ENCODE measurements at regions of chr16 and their contacts with region 1.

Region 1: GRCh38 chr16:31073968-31074813 is at the starts of genes ZNF646 and ZNF668:
- DNase-seq: peak; percentile 90 to 99 (median 98)
- ATAC-seq: peak; percentile 80 to 84
- H3K4me3 Mint-ChIP-seq: peak within 1 kb of the TSS; percentile 81 to 97 (median 96)
- H3K27ac Mint-ChIP-seq: peak within 1 kb of the TSS; percentile 90 to 99 (median 96)
- H3K4me1 Mint-ChIP-seq: peaks cover 21 to 52% (median 45%) of the 10 kb centered on the region in 4 donors
- H3K27me3 Mint-ChIP-seq: no peaks in the 10 kb centered on the region
- polyA plus RNA-seq, gene ZNF646: 2.8 to 9.1 (median 4.0) TPM
- polyA plus RNA-seq, gene ZNF668: 4.2 to 9.1 (median 7.5) TPM

Region 2: GRCh38 chr16:30941600-30942425 is 132.4 kb before region 1 on chr16:
- POLR2A ChIA-PET with region 1: interaction called, 12 read pairs
- DNase-seq: peak in 9 of 10 donors; percentile 36 to 67 (median 52)
- ATAC-seq: peak; percentile 93 to 98
- H3K4me3 Mint-ChIP-seq: peak overlapping the region in 2 of 10 donors; percentile 12 to 55
- H3K27ac Mint-ChIP-seq: peak overlapping the region in 4 of 10 donors; percentile 34 to 62 (median 48)
- H3K4me1 Mint-ChIP-seq: peaks cover 14 to 21% (median 19%) of the 10 kb centered on the region in 4 donors
- H3K27me3 Mint-ChIP-seq: no peaks in the 10 kb centered on the region

Region 3: DNA sequence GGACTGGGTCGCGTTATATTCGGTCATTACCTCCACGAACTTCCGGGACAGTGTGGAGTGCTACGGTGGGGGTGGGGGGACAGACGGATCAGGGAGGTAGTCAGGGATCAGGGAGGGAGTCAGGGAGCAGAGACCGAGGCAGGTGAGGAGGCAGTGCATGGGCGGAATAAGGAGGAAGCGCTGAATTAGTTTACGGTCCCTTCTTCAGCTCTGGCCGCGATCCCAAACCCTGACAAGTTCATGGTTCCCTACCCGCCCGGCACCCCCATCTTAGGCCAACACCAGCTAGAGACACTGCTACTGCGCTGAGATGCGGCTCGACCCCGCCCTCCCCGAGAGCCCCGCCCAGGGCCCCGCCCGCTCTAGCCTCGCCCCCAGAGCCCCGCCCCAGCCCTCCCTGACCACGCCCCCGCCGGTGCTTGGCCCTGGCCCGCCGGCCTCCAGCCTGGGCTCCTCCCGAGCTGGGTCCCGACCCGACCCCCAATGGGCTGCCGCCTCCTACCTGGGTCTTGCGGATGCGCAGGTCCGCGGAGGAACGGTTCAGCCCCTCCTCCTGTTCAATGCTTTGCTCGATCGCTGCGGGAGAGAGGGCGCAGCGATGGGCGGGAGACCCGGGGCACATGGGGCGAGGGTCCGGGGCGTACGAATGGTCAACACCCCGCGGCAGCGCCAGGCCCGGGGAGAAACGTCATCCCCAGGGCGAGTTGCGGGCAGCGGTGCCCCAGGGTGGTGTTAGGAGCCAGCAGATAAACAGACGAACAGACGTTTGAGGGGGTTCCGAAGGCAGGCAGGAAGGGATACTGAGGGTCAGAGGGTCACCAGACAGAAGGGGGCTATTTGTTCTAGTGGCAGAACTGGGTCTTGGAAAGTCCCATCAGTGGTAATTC is 76.9 kb before region 1 on chr16:
- POLR2A ChIA-PET with region 1: interaction called, 11 read pairs
- DNase-seq: peak; percentile 51 to 93 (median 75)
- ATAC-seq: peak; percentile 97 to 99
- H3K4me3 Mint-ChIP-seq: peak overlapping the region; percentile 81 to 93 (median 84)
- H3K27ac Mint-ChIP-seq: peak overlapping the region; percentile 65 to 95 (median 92)
- H3K4me1 Mint-ChIP-seq: peaks cover 2 to 12% (median 8%) of the 10 kb centered on the region in 4 donors
- H3K27me3 Mint-ChIP-seq: no peaks in the 10 kb centered on the region

Region 4: DNA sequence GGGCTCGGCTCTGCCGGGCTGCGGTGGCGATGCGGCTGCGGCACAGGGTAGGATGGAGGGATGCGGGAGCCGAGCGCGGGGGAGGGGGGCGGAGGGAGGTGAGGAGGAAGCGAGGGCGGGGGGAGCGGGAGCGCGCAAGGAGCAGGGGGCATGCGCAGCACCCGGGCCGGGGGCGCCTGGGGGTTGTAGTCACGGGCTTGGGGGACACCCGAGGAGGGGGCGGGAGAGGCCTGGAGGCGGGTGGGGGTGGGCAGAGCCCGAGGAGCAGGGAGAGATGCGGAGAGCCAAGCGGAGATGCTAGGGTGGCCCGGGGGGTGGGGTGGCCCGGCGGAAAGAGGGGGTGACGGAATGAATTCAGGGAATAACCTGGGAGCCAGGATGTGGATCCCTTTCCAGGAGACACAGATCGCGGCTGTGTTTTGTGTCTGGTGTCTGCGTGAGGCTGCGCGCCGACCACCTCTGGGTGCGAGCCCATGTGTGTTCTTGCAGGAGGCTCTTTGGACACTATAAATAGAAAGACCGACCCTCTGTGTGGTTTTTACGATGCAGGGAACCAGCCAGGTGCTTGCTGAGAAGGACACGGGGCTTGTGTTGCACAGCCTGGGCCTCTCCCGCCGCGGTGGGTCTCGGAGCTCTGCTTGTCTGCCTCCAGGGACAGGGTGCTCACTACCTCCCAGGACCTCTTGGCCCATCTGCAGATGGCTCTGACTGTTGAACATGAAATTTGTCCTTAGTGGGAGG is 63.4 kb before region 1 on chr16 and contains the start of gene STX1B:
- POLR2A ChIA-PET with region 1: no interaction called
- DNase-seq: peak; percentile 34 to 84 (median 60)
- ATAC-seq: peak; percentile 81 to 83
- H3K4me3 Mint-ChIP-seq: peak within 1 kb of the TSS; percentile 76 to 92 (median 84)
- H3K27ac Mint-ChIP-seq: peak within 1 kb of the TSS; percentile 11 to 91 (median 80)
- H3K4me1 Mint-ChIP-seq: peaks cover 9 to 34% (median 20%) of the 10 kb centered on the region in 4 donors
- H3K27me3 Mint-ChIP-seq: peaks cover 2 to 26% (median 14%) of the 10 kb centered on the region in 5 donors
- polyA plus RNA-seq, gene STX1B: 0.07 to 0.49 TPM in 2 of 3 donors, not detected in the other

Region 5: DNA sequence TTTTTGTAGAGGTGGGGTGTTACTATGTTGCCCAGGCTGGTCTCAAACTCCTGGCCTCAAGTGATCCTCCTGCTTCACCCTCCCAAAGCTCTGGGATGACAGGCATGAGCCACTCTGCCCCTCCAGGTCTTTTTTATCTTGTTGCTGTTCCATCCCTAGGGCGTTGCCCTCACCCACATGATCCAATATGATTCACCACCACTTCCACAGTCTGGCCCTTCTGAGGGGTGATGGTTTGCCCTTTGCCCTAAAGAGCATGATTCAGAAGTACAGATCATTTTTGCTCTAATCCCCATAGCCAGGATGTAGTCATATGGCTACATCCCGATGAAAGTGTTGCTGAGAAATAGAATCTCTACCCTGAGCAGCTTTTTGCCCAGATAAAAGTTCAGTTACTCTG is 22.1 kb before region 1 on chr16:
- POLR2A ChIA-PET with region 1: no interaction called
- DNase-seq: no peak
- ATAC-seq: no peak
- H3K4me3 Mint-ChIP-seq: no peak overlapping the region
- H3K27ac Mint-ChIP-seq: peak overlapping the region in 3 of 10 donors; percentile 7 to 66 (median 29)
- H3K4me1 Mint-ChIP-seq: peaks cover 0 to 3% (median 0%) of the 10 kb centered on the region in 4 donors
- H3K27me3 Mint-ChIP-seq: peaks cover 0 to 2% (median 0%) of the 10 kb centered on the region in 5 donors

Region 6: DNA sequence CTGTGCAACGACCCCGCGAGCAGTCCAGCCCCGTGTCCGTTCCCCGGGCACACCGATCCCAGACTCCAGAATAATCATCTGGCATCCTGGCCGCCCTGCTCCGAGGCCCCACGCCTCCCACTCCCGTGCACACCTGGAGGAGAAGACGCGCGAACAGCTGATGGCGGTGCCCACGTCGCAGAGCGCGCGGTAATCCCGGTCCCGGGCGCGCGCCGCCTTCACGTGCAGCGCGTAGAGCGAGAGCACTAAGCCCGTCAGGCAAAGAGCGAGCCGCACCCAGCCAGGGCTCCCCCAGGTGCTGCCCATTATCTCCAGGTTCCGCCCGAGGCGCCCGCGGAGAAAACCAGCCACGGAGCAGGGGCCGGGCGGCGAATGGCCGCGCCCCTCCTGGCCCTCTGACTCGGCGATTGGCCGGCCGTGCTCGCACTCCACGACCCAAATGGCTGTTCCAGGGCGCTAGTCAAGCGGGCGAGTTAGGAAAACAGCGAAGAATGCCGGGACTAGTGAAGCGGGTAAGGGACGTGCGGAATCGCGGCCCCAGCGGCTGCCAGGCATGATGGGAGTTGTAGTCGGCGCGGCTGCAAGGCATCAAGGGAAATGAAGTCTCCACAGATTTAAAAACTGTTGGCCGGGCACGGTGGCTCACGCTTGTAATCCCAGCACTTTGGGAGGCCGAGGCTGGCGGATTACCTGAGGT is 20.4 kb after region 1 on chr16 and contains the start of gene VKORC1:
- POLR2A ChIA-PET with region 1: interaction called, 26 read pairs
- DNase-seq: peak; percentile 68 to 89 (median 82)
- ATAC-seq: peak; percentile 91 to 95
- H3K4me3 Mint-ChIP-seq: peak within 1 kb of the TSS; percentile 89 to 98 (median 92)
- H3K27ac Mint-ChIP-seq: peak within 1 kb of the TSS; percentile 63 to 96 (median 92)
- H3K4me1 Mint-ChIP-seq: peaks cover 13 to 36% (median 32%) of the 10 kb centered on the region in 4 donors
- H3K27me3 Mint-ChIP-seq: no peaks in the 10 kb centered on the region
- polyA plus RNA-seq, gene VKORC1: 98.2 to 109 (median 99.1) TPM

Region 7: GRCh38 chr16:31128711-31129567 is 54.7 kb after region 1 on chr16:
- POLR2A ChIA-PET with region 1: no interaction called
- DNase-seq: no peak
- ATAC-seq: no peak
- H3K4me3 Mint-ChIP-seq: peak overlapping the region in 1 of 10 donors; percentile 28
- H3K27ac Mint-ChIP-seq: peak overlapping the region in 4 of 10 donors; percentile 25 to 84 (median 52)
- H3K4me1 Mint-ChIP-seq: peaks cover 0 to 9% (median 5%) of the 10 kb centered on the region in 4 donors
- H3K27me3 Mint-ChIP-seq: no peaks in the 10 kb centered on the region

Region 8: GRCh38 chr16:31142109-31143010 is 68.2 kb after region 1 on chr16:
- POLR2A ChIA-PET with region 1: interaction called, 35 read pairs
- DNase-seq: peak; percentile 92 to 99 (median 96)
- ATAC-seq: peak; percentile 85 to 87
- H3K4me3 Mint-ChIP-seq: peak overlapping the region; percentile 52 to 82 (median 68)
- H3K27ac Mint-ChIP-seq: peak overlapping the region; percentile 8 to 95 (median 90)
- H3K4me1 Mint-ChIP-seq: peaks cover 10 to 18% (median 15%) of the 10 kb centered on the region in 4 donors
- H3K27me3 Mint-ChIP-seq: peaks cover 0 to under 1% (median 0%) of the 10 kb centered on the region in 5 donors